Naive thymus-derived CD4-positive, alpha-beta T cell (primary cell): ENCODE measurements at regions of chr1 and their contacts with region 1.

Region 1: DNA sequence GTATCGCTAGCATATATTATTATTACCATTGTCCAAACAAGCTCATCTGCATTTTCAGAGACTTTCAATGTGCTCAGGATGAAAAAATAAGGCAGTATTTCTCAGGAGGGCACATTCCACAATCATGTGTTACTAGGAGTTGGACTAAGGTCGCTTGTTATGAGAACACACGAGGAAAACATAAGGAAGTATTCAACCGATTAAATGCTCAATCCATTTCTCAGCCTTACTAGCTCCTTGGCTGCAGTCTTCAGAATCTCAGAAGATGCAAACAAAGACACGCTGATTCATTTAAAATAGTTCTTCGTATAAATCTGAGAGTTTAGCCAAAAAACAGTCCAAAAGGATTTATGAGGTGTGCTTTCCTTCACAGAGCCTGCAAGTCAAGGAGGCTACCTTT is 82.0 kb upstream of the JAK1 start:
- DNase-seq: no peak
- ATAC-seq: no peak
- H3K4me3 ChIP-seq: no peak overlapping the region
- H3K4me3 Mint-ChIP-seq: peak overlapping the region in 2 of 10 donors; percentile 12 to 14
- H3K27ac ChIP-seq: no peak overlapping the region
- H3K27ac Mint-ChIP-seq: peak overlapping the region in 6 of 9 donors; percentile 27 to 91 (median 63)
- H3K4me1 ChIP-seq: peaks cover 22 to 36% of the 10 kb centered on the region in 2 donors
- H3K4me1 Mint-ChIP-seq: peaks cover 31 to 77% (median 67%) of the 10 kb centered on the region in 7 donors
- H3K27me3 ChIP-seq: no peaks in the 10 kb centered on the region
- H3K27me3 Mint-ChIP-seq: no peaks in the 10 kb centered on the region

Region 2: GRCh38 chr1:65009724-65010420 is 38.5 kb before region 1 on chr1:
- CTCF ChIA-PET with region 1: interaction called, 3 read pairs
- POLR2A ChIA-PET with region 1: no interaction called
- intact Hi-C with region 1: loop called in 1 of 2 experiments (anchors 5 kb)
- DNase-seq: peak in 1 of 9 donors; percentile 5
- ATAC-seq: peak; percentile 31
- H3K4me3 ChIP-seq: no peak overlapping the region
- H3K4me3 Mint-ChIP-seq: peak overlapping the region in 9 of 10 donors; percentile 18 to 69 (median 55)
- H3K27ac ChIP-seq: peak overlapping the region; percentile 8
- H3K27ac Mint-ChIP-seq: peak overlapping the region in 8 of 9 donors; percentile 2 to 87 (median 34)
- H3K4me1 ChIP-seq: peaks cover 19 to 20% of the 10 kb centered on the region in 2 donors
- H3K4me1 Mint-ChIP-seq: peaks cover 29 to 49% (median 37%) of the 10 kb centered on the region in 7 donors
- H3K27me3 ChIP-seq: no peaks in the 10 kb centered on the region
- H3K27me3 Mint-ChIP-seq: peaks cover 0 to 13% (median 0%) of the 10 kb centered on the region in 5 donors

Region 3: DNA sequence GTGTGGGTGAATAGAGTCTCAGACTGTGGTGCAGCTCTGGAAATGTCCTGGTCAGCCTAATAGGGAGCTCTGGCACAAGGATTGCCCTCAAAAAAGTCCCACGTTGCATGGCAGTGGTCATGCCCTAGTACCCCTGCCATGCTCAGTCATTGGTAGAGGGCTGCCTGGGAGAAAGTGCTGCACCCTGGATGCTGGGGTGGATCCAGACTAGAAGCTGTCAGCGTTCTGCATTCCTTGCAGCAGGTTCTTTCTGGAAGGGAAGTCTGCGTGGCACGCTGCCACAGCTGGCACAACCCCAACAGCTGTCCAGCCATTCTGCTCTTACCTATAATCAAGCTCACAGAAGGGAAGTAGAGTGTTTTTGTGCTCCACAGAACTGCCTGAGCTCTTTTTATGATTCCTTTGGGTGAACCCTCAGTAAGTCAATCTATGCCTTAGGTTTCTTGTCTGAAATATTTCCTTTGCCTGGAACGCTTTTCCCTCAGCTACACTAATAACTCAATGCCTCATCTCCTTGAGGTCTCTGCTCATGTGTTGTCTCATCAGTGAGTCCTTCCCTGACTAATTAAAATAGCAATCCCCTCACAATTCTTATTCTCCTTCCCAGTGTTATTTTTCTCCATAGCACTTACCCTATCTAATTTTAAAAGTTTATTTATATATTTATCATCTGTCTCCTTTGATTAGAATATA is 20.5 kb before region 1 on chr1:
- CTCF ChIA-PET with region 1: no interaction called
- POLR2A ChIA-PET with region 1: interaction called, 12 read pairs
- intact Hi-C with region 1: no loop called
- DNase-seq: no peak
- ATAC-seq: no peak
- H3K4me3 ChIP-seq: no peak overlapping the region
- H3K4me3 Mint-ChIP-seq: no peak overlapping the region
- H3K27ac ChIP-seq: no peak overlapping the region
- H3K27ac Mint-ChIP-seq: no peak overlapping the region
- H3K4me1 ChIP-seq: peaks cover 0 to 5% of the 10 kb centered on the region in 2 donors
- H3K4me1 Mint-ChIP-seq: peaks cover 0 to 31% (median 18%) of the 10 kb centered on the region in 7 donors
- H3K27me3 ChIP-seq: no peaks in the 10 kb centered on the region
- H3K27me3 Mint-ChIP-seq: peaks cover 0 to 8% (median 0%) of the 10 kb centered on the region in 5 donors

Region 4: DNA sequence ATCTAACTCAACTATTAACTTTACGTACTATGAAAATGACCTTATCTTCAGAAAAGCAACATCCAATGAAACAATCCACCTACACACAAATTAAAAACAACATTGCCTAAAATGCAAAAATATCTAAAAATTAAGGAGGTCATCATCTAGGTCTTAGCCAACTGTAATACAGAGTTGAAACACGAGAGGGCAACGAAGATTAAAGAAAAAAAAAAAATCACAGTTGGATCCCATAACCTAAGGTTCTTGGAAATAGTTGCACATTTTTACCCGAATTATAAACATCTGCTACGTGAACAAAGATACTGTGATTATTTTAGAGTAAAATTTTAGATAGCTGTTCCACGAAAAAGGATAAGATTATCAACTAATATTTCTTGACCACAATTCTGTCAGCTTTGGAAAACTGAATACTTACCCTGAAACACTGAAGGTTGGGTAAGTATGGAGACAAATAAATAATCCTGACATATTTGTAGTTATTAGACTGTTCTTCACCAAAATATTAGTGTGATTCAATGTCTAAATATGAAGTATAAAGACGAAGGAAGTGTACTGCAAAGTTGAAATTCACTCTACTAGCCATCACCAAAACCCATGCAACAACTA is 11.7 kb after region 1 on chr1:
- CTCF ChIA-PET with region 1: interaction called, 9 read pairs
- POLR2A ChIA-PET with region 1: interaction called, 57 read pairs
- intact Hi-C with region 1: loop called in 1 of 2 experiments (anchors 1 kb)
- DNase-seq: peak in 3 of 9 donors; percentile 25 to 29 (median 25)
- ATAC-seq: peak; percentile 51
- H3K4me3 ChIP-seq: no peak overlapping the region
- H3K4me3 Mint-ChIP-seq: peak overlapping the region in 5 of 10 donors; percentile 8 to 54 (median 51)
- H3K27ac ChIP-seq: no peak overlapping the region
- H3K27ac Mint-ChIP-seq: peak overlapping the region in 6 of 9 donors; percentile 12 to 76 (median 34)
- H3K4me1 ChIP-seq: peaks cover 6 to 16% of the 10 kb centered on the region in 2 donors
- H3K4me1 Mint-ChIP-seq: peaks cover 21 to 87% (median 80%) of the 10 kb centered on the region in 7 donors
- H3K27me3 ChIP-seq: no peaks in the 10 kb centered on the region
- H3K27me3 Mint-ChIP-seq: no peaks in the 10 kb centered on the region

Region 5: GRCh38 chr1:65734979-65735378 is 686.6 kb after region 1 on chr1:
- CTCF ChIA-PET with region 1: no interaction called
- POLR2A ChIA-PET with region 1: no interaction called
- intact Hi-C with region 1: no loop called
- DNase-seq: no peak
- ATAC-seq: no peak
- H3K4me3 ChIP-seq: no peak overlapping the region
- H3K4me3 Mint-ChIP-seq: no peak overlapping the region
- H3K27ac ChIP-seq: no peak overlapping the region
- H3K27ac Mint-ChIP-seq: no peak overlapping the region
- H3K4me1 ChIP-seq: no peaks in the 10 kb centered on the region
- H3K4me1 Mint-ChIP-seq: no peaks in the 10 kb centered on the region
- H3K27me3 ChIP-seq: no peaks in the 10 kb centered on the region
- H3K27me3 Mint-ChIP-seq: peaks cover 0 to 13% (median 6%) of the 10 kb centered on the region in 5 donors